SK-N-SH (cell line): ENCODE measurements at regions of chr12 and their contacts with region 1.

Region 1: GRCh38 chr12:53065975-53066931 is 12.9 kb downstream of the SPRYD3 start:
- DNase-seq: peak; percentile 92
- H3K4me3 ChIP-seq: no peak overlapping the region; a peak in 1 of 4 replicates
- H3K27ac ChIP-seq: peak overlapping the region in 1 of 2 experiments; percentile 66; a peak in 2 of 4 replicates
- H3K4me1 ChIP-seq: peaks cover 20 to 22% of the 10 kb centered on the region in 2 experiments; a peak in 3 of 4 replicates
- H3K27me3 ChIP-seq: no peaks in the 10 kb centered on the region
- CTCF ChIP-seq: peak; percentile 84
- EP300 ChIP-seq: no peak
- RAD21 ChIP-seq: peak; percentile 94

Region 2: GRCh38 chr12:52847335-52848102 is 218.7 kb before region 1 on chr12:
- CTCF ChIA-PET with region 1: no interaction called
- POLR2A ChIA-PET with region 1: no interaction called
- DNase-seq: no peak
- H3K4me3 ChIP-seq: no peak overlapping the region
- H3K27ac ChIP-seq: no peak overlapping the region
- H3K4me1 ChIP-seq: no peaks in the 10 kb centered on the region
- H3K27me3 ChIP-seq: peaks cover 52% of the 10 kb centered on the region
- CTCF ChIP-seq: no peak
- EP300 ChIP-seq: no peak
- RAD21 ChIP-seq: no peak

Region 3: DNA sequence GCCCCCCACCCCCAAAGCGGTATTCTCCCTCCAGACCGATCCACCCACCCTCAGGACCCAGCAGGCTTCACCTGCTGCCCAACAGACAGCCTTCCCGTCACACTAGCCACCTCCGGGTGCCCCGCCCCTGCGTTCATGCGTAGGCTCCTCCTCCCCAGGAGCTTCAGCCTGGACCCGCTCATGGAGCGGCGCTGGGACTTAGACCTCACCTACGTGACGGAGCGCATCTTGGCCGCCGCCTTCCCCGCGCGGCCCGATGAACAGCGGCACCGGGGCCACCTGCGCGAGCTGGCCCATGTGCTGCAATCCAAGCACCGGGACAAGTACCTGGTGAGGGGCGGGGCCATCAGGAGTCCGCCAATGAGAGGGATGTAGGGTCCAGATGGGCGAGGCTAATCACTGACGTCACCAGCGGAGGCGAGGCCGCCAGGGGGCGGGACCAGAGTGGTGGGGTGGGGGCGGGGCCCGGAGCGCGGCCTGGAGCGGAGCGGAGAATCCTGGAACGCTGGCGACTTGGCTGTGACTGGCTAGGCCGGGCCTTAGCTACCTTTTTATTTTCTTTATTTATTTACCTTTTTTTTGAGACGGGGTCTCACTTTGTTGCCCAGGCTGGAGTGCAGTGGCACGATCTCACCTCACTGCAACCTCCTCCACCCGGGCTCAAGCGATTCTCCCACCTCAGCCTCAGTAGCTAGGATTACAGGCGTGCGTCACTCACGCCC is 12.0 kb before region 1 on chr12:
- CTCF ChIA-PET with region 1: interaction called, 182 read pairs
- POLR2A ChIA-PET with region 1: interaction called, 4 read pairs
- DNase-seq: peak; percentile 97
- H3K4me3 ChIP-seq: peak overlapping the region; percentile 66
- H3K27ac ChIP-seq: peak overlapping the region; percentile 35 to 78; a peak in 3 of 4 replicates
- H3K4me1 ChIP-seq: peaks cover 25 to 46% of the 10 kb centered on the region in 2 experiments
- H3K27me3 ChIP-seq: no peaks in the 10 kb centered on the region
- CTCF ChIP-seq: no peak
- EP300 ChIP-seq: no peak
- RAD21 ChIP-seq: no peak

Region 4: DNA sequence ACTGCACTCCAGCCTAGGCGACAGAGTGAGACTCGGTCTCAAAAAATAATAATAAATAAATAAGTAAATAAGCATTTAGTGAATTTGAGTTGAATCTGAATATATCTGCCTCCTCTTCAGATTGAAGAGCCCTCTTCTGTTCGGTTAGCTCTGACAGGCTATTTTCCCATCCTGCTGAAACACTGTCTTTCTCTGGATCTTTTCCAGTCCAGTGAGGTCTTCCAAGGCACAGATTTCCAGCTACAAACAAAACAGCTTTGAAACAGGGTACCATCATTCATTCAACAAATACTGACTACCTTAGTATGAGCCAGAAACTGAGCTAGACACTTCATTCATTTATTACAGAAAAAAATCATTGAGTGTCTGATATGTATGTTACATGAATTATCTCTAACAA is 20.1 kb after region 1 on chr12:
- CTCF ChIA-PET with region 1: interaction called, 130 read pairs
- POLR2A ChIA-PET with region 1: no interaction called
- DNase-seq: no peak
- H3K4me3 ChIP-seq: no peak overlapping the region
- H3K27ac ChIP-seq: no peak overlapping the region
- H3K4me1 ChIP-seq: peaks cover 0 to under 1% of the 10 kb centered on the region in 2 experiments; a peak in 1 of 4 replicates
- H3K27me3 ChIP-seq: no peaks in the 10 kb centered on the region
- CTCF ChIP-seq: no peak
- EP300 ChIP-seq: no peak
- RAD21 ChIP-seq: no peak

Region 5: DNA sequence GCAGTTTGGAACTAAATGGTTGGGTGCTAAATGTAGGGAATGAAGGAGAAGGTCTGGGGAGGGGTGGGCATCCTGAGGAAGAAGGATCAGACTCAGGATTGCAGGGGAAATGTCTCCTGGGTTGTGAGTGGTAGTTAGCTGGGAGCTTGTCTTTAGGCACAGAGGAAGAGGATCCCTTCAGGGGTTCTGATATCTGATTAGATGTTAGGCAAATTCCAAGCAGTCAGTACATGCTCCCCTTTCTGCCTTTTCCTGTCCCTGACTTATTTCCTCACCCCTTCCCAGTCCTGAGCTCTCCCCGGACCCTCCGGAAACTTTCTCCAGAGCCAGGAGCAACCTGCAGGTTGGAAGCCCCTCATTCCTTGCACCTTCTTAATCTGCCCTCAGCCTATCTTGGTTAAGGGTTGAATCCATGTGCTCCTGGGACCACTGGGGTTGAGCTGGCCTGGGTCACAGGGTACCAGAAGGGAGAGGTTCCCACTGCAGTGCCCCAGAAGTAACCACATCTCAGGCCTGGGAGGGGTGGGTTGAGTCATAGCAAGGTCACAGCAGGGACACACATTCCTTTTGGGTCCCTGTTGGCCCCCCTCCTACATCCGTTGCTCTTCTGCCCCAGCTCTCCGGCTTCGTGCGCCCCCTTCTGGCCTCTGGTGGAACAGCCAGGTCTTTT is 32.9 kb after region 1 on chr12:
- CTCF ChIA-PET with region 1: interaction called, 385 read pairs
- POLR2A ChIA-PET with region 1: interaction called, 8 read pairs
- DNase-seq: peak; percentile 90
- H3K4me3 ChIP-seq: peak overlapping the region; percentile 62 to 78; a peak in 3 of 4 replicates
- H3K27ac ChIP-seq: peak overlapping the region; percentile 90 to 98
- H3K4me1 ChIP-seq: peaks cover 10 to 21% of the 10 kb centered on the region in 2 experiments; a peak in 2 of 4 replicates
- H3K27me3 ChIP-seq: no peaks in the 10 kb centered on the region
- CTCF ChIP-seq: peak; percentile 90
- EP300 ChIP-seq: peak; percentile 30 to 66; a peak in 2 of 4 replicates
- RAD21 ChIP-seq: peak; percentile 86

Region 6: DNA sequence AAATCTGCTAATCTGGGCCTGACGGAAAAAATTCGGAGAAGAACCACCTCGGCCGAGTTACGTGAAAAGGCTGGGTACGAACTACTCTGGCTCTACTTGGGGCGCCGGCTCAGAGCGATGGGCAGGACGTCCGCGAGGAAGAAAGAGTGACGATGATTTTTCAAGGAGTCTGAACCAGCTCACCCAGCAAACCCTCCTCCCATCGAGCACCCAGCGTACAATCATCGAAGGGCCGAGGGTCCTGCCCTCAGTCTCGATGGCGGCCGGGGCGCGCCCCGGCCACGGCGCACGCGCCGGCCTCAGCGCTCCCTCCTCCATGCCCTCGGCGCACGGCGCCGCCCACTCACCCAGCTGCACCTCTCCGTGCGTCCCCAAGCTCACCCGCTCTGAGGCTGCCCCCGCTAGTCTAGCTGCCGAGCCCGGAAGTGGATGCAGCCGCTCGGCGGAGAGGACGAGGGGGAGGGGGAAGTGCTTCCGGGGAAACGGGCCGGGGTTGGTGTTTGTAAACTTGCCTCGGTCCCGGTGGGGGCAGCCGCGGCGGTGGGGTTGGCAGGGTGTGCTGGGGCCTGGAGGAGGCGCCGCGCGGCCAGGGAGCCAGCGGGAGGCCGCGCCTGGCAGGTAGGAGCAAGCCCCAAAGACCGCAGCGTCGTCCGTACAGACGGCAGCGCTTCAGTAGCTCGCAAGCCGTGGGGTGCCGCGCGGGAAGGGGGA is 114.1 kb after region 1 on chr12 and contains the starts of genes CSAD and ZNF740:
- CTCF ChIA-PET with region 1: interaction called, 16 read pairs
- POLR2A ChIA-PET with region 1: no interaction called
- DNase-seq: peak; percentile 98
- H3K4me3 ChIP-seq: peak within 1 kb of the TSS; percentile 77 to 78
- H3K27ac ChIP-seq: peak within 1 kb of the TSS; percentile 89 to 97
- H3K4me1 ChIP-seq: peaks cover 17 to 27% of the 10 kb centered on the region in 2 experiments; a peak in 3 of 4 replicates
- H3K27me3 ChIP-seq: no peaks in the 10 kb centered on the region
- CTCF ChIP-seq: no peak
- EP300 ChIP-seq: 0 out of 4 replicates have a peak, but pooled peaks of 1 of the 2 experiments have one; percentile 6
- RAD21 ChIP-seq: no peak
- polyA plus RNA-seq, gene CSAD: 32.2 and 45.4 TPM in 2 replicates
- polyA plus RNA-seq, gene ZNF740: 14.6 and 21.8 TPM in 2 replicates

Region 7: DNA sequence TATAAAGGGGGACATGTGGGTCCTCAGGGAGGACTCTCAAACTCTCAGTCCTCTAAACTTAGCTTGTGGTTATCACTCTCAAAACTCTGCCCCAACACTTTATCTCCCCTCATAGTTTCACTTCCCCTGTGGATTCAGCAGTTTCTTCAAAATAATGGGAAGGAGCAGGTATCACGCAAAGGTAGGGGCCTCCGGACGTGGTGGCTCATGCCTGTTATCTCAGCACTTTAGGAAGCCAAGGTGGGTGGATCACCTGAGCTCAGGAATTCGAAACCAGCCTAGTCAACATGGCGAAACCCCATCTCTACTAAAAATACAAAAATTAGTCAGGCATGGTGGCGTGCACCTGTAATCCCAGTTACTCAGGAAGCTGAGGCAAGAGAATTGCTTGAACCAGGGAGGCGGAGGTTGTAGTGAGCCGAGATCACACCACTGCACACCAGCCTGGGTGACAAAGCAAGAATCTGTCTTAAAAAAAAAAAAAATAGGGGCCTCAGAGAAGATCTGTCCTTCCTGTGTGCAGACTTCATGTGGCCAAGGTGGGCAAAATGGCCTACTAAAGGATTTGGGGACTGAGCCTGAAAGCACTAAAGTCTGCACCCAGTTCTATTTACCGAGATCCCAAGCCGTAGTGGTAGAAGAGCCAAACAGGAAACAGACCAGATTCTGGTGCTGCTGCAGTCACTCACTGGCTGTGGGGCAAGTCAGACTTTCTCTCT is 134.4 kb after region 1 on chr12:
- CTCF ChIA-PET with region 1: interaction called, 96 read pairs
- POLR2A ChIA-PET with region 1: no interaction called
- DNase-seq: no peak
- H3K4me3 ChIP-seq: no peak overlapping the region
- H3K27ac ChIP-seq: peak overlapping the region in 1 of 2 experiments; percentile 46; a peak in 1 of 4 replicates
- H3K4me1 ChIP-seq: no peaks in the 10 kb centered on the region
- H3K27me3 ChIP-seq: no peaks in the 10 kb centered on the region
- CTCF ChIP-seq: no peak
- EP300 ChIP-seq: no peak
- RAD21 ChIP-seq: no peak